ENCODE measurements at regions of chr1 and their contacts with region 1.

Region 1: DNA sequence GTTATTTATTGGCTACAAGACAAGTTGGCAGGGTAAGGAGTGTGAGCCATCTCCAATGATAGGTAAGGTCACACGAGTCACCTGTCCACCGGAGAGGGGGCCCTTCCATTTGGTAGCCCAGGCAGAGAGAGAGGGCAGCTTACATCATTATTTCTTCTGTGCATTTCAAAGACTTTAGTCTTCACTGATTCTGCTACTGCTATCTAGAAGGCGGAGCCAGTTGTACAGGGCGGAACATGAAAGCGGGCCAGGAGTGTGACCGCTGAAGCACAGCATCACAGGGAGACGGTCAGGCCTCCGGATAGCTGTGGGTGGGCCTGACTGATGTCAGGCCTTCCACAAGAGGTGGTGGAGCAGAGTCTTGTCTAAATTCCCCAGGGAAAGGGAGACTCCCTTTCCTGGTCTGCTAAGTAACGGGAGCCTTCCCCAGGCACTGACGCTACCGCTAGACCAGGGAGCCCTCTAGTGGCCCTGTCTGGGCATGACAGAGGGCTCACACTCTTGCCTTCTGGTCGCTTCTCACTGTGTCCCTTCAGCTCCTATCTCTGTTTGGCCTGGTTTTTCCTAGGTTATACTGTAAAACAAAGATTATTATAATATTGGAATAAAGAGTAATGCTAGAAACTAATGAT is 36.7 kb downstream of the ZNF695 start:
- DNase-seq: peak; percentile 56 to 76 (median 63)
- ATAC-seq: peak in 1 of 4 donors; percentile 55
- H3K4me3 ChIP-seq: peak overlapping the region in 7 of 12 donors; percentile 5 to 46 (median 21)
- H3K27ac ChIP-seq: no peak overlapping the region
- H3K4me1 ChIP-seq: no peaks in the 10 kb centered on the region
- H3K27me3 ChIP-seq: no peaks in the 10 kb centered on the region
- CTCF ChIP-seq: peak; percentile 76 to 95 (median 90)
- POLR2A ChIP-seq: no peak

Region 2: DNA sequence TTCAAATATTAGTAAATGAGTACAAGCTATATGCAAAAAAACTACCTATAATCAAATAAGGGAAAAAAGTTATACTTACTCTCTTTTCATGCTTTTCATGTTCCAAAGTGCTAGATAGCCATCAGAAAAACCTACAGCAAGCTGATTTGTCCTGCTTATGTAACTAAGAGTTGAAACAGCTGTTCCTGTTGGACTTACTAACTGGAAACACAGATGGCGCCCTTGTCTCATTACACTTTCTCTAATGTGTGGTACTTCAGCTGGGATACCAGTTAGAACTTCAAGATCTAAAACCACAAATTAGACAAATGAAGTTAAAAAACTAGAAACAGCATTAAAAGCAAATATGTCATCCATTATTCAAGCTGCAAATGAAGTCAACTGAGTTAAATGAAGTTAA is 63.7 kb before region 1 on chr1:
- intact Hi-C with region 1: loop called (anchors 1 to 5 kb)
- DNase-seq: peak in 2 of 5 donors; percentile 16 to 34
- ATAC-seq: peak in 3 of 4 donors; percentile 57 to 65 (median 65)
- H3K4me3 ChIP-seq: no peak overlapping the region
- H3K27ac ChIP-seq: no peak overlapping the region
- H3K4me1 ChIP-seq: peaks cover 0 to 16% (median 2%) of the 10 kb centered on the region in 12 donors
- H3K27me3 ChIP-seq: no peaks in the 10 kb centered on the region
- CTCF ChIP-seq: peak in 11 of 12 donors; percentile 30 to 64 (median 50)
- POLR2A ChIP-seq: no peak